A549 (cell line): ENCODE measurements at regions of chr17 and their contacts with region 1.

Region 1: GRCh38 chr17:60386147-60387058 is 5.5 kb downstream of the USP32 start:
- DNase-seq: no peak
- ATAC-seq: no peak
- H3K4me3 ChIP-seq: no peak overlapping the region
- H3K27ac ChIP-seq: no peak overlapping the region
- H3K4me1 ChIP-seq: peaks cover 44% of the 10 kb centered on the region
- CTCF ChIP-seq: no peak
- EP300 ChIP-seq: no peak
- POLR2A ChIP-seq: no peak
- RAD21 ChIP-seq: no peak

Region 2: DNA sequence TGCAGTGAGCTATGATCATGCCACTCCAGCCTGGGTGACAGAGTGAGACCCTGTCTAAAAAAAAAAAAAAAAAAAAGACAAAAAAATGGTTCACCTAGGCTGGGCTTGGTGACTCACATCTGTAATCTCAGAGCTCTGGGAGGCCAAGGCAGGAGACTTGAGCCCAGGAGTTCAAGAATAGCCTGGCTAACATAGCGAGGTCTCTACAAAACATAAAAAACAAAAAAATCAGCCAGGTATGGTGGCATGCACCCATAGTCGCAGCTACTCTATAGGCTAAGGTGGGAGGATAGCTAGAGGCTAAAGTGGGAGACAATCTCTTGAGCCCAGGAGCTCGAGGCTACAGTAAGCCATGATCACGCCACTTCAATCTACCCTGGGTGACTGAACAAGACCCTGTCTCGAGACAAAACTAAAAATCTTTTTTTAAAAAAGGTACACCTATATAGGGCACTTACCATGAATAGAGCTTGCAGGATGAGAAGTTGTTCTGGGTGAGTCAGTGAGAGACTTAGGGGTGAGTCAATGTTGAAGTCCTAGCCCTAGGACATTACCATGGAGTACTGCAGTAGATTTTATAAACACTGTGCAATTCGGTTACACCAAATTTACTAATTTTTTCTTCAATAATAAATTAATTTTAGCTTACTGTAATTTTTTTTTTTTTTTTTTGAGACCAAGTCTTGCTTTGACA is 13.5 kb before region 1 on chr17:
- CTCF ChIA-PET with region 1: interaction called, 5 read pairs
- POLR2A ChIA-PET with region 1: interaction called, 16 read pairs
- DNase-seq: peak; percentile 45 to 48
- ATAC-seq: peak; percentile 98 to 99
- H3K4me3 ChIP-seq: no peak overlapping the region
- H3K27ac ChIP-seq: peak overlapping the region in 1 of 2 experiments; percentile 57; a peak in 2 of 6 replicates
- H3K4me1 ChIP-seq: peaks cover 21% of the 10 kb centered on the region
- CTCF ChIP-seq: no peak
- EP300 ChIP-seq: no peak
- POLR2A ChIP-seq: no peak
- RAD21 ChIP-seq: no peak